Activated naive CD4-positive, alpha-beta T cell treated with anti-CD3 and anti-CD28 coated beads for 36 hours (primary cell): ENCODE measurements at regions of chr11 and their contacts with region 1.

Region 1: GRCh38 chr11:102940714-102941588 is 14.6 kb downstream of the MMP13 start:
- DNase-seq: peak; percentile 68
- H3K4me3 Mint-ChIP-seq: no peak overlapping the region
- H3K27ac Mint-ChIP-seq: no peak overlapping the region
- H3K4me1 Mint-ChIP-seq: peaks cover 3% of the 10 kb centered on the region
- H3K27me3 Mint-ChIP-seq: peaks cover 11% of the 10 kb centered on the region

Region 2: GRCh38 chr11:102279641-102280170 is 661.2 kb before region 1 on chr11:
- CTCF ChIA-PET with region 1: no interaction called
- intact Hi-C with region 1: loop called (anchors 10 kb)
- DNase-seq: peak; percentile 38
- H3K4me3 Mint-ChIP-seq: peak overlapping the region; percentile 23
- H3K27ac Mint-ChIP-seq: no peak overlapping the region
- H3K4me1 Mint-ChIP-seq: peaks cover 7% of the 10 kb centered on the region
- H3K27me3 Mint-ChIP-seq: peaks cover 6% of the 10 kb centered on the region

Region 3: DNA sequence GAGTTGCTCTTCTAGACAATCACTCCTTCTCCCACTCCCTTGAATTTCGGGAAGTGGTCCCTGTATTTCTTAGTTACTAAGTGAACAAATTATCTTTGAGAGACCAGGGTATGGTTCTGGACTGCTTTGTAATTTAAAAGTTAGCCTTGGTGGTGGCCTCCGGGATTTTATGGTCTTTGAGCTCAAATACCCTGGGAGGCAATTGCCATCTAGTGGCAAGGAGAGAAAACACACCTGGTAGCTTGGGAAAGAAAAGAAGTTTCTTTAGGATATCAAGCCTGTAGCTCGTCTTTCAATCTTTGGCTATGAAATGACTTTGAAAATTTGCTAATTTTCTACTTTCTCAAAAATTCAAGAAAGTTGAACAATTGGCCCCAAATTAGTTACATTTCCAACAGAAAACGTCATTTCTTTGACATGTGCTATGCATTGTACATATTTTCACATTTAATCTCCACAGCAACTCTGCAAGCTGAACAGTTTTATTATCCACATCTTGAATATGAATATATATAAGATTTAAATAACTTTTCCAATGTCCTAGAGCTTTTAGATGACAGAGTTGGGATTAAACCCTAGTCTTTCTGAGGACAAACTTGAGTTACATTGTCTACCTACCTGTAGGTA is 274.5 kb before region 1 on chr11:
- CTCF ChIA-PET with region 1: interaction called, 6 read pairs
- intact Hi-C with region 1: loop called (anchors 5 kb)
- DNase-seq: peak; percentile 28
- H3K4me3 Mint-ChIP-seq: no peak overlapping the region
- H3K27ac Mint-ChIP-seq: no peak overlapping the region
- H3K4me1 Mint-ChIP-seq: no peaks in the 10 kb centered on the region
- H3K27me3 Mint-ChIP-seq: no peaks in the 10 kb centered on the region

Region 4: DNA sequence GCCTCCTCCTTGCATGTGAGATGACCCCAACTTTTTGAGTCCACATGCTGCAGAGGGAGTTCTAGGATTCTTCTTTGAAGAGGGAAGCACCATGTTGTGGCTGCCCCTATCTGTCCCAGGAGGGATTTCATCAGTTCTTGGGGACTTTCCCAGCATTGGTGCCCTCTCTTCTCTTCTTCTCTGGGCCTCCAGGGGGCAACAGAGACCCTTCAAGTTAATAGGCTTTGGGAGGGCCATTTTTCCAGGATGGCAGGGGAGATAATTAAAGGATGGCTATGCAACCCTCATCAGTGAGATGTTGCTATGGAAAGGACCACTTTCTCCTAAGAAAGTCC is 146.5 kb before region 1 on chr11:
- CTCF ChIA-PET with region 1: interaction called, 4 read pairs
- intact Hi-C with region 1: loop called (anchors 10 kb)
- DNase-seq: peak; percentile 54
- H3K4me3 Mint-ChIP-seq: no peak overlapping the region
- H3K27ac Mint-ChIP-seq: no peak overlapping the region
- H3K4me1 Mint-ChIP-seq: no peaks in the 10 kb centered on the region
- H3K27me3 Mint-ChIP-seq: no peaks in the 10 kb centered on the region

Region 5: DNA sequence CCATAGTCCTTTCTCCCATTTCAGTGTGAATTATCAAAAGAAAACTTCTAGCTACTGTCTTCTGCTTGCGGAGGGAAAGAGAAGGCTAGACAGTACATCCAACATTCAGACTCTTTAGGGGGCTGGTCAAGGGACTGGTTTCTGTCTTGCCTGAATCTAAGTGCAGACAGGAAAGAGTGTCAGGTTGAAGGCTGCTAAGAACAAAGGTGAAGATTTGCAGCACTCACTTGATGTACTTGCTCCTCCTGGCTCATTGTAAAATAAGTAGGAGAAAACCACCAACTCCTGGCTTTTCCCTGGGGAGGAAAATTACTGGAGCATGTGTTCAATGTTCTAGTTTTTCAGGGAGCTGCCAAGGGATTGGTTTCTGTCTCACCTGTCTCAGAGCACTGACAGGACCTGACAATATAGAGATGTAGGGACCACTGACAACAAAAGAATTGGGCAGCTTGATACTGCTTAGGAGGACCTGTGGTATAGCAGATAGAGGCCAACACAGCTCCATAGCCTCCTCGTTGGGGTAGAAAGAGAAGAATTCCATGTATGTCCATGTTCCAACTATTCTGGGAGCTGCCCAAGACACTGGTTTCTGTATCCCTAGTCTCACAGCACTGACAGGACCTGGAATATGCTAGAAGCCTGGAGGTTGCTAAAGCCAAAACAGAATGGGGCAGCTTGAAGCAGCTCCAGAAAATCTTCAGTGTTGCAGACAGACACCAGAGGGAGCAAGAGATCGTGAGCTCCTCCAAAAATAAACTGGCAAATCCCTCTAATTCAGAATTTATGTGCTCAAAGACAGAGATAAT is 26.5 kb before region 1 on chr11:
- CTCF ChIA-PET with region 1: interaction called, 16 read pairs
- intact Hi-C with region 1: loop called (anchors 1 kb)
- DNase-seq: peak; percentile 30
- H3K4me3 Mint-ChIP-seq: no peak overlapping the region
- H3K27ac Mint-ChIP-seq: no peak overlapping the region
- H3K4me1 Mint-ChIP-seq: no peaks in the 10 kb centered on the region
- H3K27me3 Mint-ChIP-seq: peaks cover 11% of the 10 kb centered on the region

Region 6: GRCh38 chr11:102929972-102930371 is 11.0 kb before region 1 on chr11:
- CTCF ChIA-PET with region 1: interaction called, 10 read pairs
- intact Hi-C with region 1: no loop called
- DNase-seq: no peak
- H3K4me3 Mint-ChIP-seq: no peak overlapping the region
- H3K27ac Mint-ChIP-seq: no peak overlapping the region
- H3K4me1 Mint-ChIP-seq: no peaks in the 10 kb centered on the region
- H3K27me3 Mint-ChIP-seq: peaks cover 2% of the 10 kb centered on the region

Region 7: GRCh38 chr11:103007534-103007933 is 66.6 kb after region 1 on chr11:
- CTCF ChIA-PET with region 1: no interaction called
- intact Hi-C with region 1: no loop called
- DNase-seq: no peak
- H3K4me3 Mint-ChIP-seq: no peak overlapping the region
- H3K27ac Mint-ChIP-seq: no peak overlapping the region
- H3K4me1 Mint-ChIP-seq: no peaks in the 10 kb centered on the region
- H3K27me3 Mint-ChIP-seq: peaks cover 14% of the 10 kb centered on the region

Region 8: GRCh38 chr11:103055221-103055890 is 114.4 kb after region 1 on chr11:
- CTCF ChIA-PET with region 1: interaction called, 4 read pairs
- intact Hi-C with region 1: loop called (anchors 1 kb)
- DNase-seq: no peak
- H3K4me3 Mint-ChIP-seq: no peak overlapping the region
- H3K27ac Mint-ChIP-seq: no peak overlapping the region
- H3K4me1 Mint-ChIP-seq: peaks cover 17% of the 10 kb centered on the region
- H3K27me3 Mint-ChIP-seq: no peaks in the 10 kb centered on the region